ENCODE measurements at regions of chr10 and their contacts with region 1.

Region 1: DNA sequence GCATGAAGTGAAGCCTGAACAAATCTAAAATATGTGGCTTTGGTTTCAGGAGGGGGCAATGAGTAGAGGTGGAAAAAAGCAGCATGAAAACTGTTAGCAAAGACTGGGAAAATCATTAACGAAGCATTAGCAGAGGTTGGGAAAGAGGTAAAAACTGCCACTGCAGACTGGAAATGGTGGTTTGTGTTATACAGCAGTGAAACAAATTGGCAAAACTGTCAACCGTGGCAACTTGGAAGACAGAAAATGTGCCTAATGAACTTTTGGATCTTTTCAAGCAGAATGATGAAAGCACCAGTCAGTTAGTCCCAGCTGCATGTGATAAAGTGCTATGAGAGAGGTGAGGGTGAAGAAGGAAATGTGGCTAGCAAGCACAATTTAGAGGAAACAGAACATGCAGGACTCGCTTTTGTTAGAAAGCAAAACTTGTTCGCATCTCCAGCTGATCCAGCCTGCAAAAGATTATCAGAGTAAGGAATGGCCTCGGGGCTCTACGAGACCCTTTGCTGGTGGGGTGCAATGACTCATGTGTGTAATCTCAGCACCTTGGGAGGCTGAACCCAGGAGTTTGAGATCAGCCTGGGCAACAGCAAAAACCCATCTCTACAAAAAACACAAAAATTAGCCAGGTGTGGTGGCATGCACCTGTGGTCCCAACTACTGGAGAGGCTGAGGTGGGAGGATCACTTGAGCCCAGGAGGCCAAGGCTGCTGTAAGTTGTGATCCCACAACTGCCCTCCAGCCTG is 45.7 kb downstream of the SKIDA1 start:
- DNase-seq: peak in 1 of 2 experiments; percentile 19
- H3K4me3 ChIP-seq: no peak overlapping the region
- H3K4me3 Mint-ChIP-seq: no peak overlapping the region
- H3K27ac Mint-ChIP-seq: peak overlapping the region; percentile 17
- H3K4me1 ChIP-seq: peaks cover 25% of the 10 kb centered on the region
- H3K4me1 Mint-ChIP-seq: peaks cover 25% of the 10 kb centered on the region
- H3K27me3 ChIP-seq: no peaks in the 10 kb centered on the region
- H3K27me3 Mint-ChIP-seq: no peaks in the 10 kb centered on the region
- CTCF ChIP-seq: no peak

Region 2: GRCh38 chr10:20871970-20872369 is 607.8 kb before region 1 on chr10:
- CTCF ChIA-PET with region 1: no interaction called
- POLR2A ChIA-PET with region 1: no interaction called
- intact Hi-C with region 1: no loop called
- DNase-seq: no peak
- H3K4me3 ChIP-seq: no peak overlapping the region
- H3K4me3 Mint-ChIP-seq: no peak overlapping the region
- H3K27ac Mint-ChIP-seq: no peak overlapping the region
- H3K4me1 ChIP-seq: no peaks in the 10 kb centered on the region
- H3K4me1 Mint-ChIP-seq: no peaks in the 10 kb centered on the region
- H3K27me3 ChIP-seq: no peaks in the 10 kb centered on the region
- H3K27me3 Mint-ChIP-seq: no peaks in the 10 kb centered on the region
- CTCF ChIP-seq: no peak

Region 3: DNA sequence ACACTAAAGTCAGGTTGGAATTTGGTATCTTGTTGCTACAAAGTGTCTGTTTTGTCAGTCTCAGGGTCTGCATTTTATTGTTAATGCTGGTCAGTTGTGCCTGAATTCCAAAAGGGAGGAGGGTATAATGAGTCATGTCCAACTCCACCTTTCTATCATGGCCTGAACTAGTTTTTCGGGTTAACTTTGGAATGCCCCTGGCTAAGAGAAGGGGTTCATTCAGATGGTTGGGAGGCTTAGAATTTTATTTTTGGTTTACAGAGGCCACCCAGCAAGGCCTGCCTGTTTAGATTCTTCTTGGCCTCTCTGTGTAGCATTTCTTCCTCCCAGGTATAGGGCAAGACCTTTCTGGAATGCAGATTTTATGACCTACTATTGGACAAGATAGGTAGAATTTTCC is 47.5 kb before region 1 on chr10:
- CTCF ChIA-PET with region 1: interaction called, 3 read pairs
- POLR2A ChIA-PET with region 1: no interaction called
- intact Hi-C with region 1: loop called (anchors 1 kb)
- DNase-seq: peak; percentile 58 to 69
- H3K4me3 ChIP-seq: no peak overlapping the region
- H3K4me3 Mint-ChIP-seq: peak overlapping the region; percentile 8
- H3K27ac Mint-ChIP-seq: peak overlapping the region; percentile 65
- H3K4me1 ChIP-seq: peaks cover 54% of the 10 kb centered on the region
- H3K4me1 Mint-ChIP-seq: peaks cover 47% of the 10 kb centered on the region
- H3K27me3 ChIP-seq: no peaks in the 10 kb centered on the region
- H3K27me3 Mint-ChIP-seq: no peaks in the 10 kb centered on the region
- CTCF ChIP-seq: no peak

Measured in Caco-2 (cell line).